H1 (cell line): ENCODE measurements at regions of chr12 and their contacts with region 1.

Region 1: DNA sequence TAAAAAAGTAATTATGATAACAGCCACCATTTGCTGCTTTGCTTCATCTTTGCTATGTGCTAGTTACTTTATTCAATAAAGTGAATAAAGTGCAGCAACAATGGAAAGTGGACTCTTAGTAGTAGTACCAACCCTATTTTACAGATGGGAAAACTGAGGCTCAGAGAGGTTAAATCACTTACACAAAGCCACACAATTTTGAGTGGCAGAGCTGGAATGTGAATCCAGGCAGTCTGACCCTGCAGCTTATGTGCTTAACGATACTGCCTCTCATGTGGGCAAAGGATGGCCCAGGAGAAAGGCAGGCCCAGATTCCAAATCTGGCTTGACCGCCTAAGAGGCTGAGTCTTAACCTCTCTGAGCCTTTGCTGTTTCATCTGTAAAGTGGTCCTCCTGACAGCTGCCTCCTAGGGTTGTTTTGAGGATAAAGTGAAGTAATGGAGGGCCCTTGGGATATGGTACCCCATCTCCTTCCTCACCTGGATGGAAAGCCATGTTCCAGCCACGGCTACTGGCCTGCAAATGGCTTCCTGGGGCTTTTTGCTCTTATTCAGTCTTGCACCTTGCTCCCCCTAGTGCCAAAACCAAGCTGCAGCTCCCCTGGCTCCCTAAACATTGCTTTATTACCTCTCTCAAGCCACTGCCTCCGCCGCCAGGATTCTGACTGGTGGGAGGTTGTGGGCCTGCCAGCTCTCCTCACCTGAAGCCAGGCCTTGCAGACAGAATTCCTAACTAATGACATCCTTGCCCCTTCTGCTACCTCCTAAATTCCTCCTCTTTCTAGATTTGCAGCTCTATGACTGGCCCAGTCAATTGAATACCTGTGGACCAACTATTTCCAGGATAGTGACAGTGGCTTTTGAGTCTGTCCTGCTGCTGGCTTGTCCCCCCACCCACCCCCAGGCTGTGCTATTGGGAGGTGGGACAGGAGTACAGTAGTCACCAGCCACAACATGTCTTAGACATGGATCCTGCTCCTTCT is 283.3 kb upstream of the PWP1 start:
- DNase-seq: peak; percentile 79 to 81
- H3K4me3 ChIP-seq: no peak overlapping the region; a peak in 1 of 8 replicates
- H3K27ac ChIP-seq: no peak overlapping the region
- H3K4me1 ChIP-seq: peaks cover 1 to 13% (median 8%) of the 10 kb centered on the region in 4 experiments; a peak in 4 of 7 replicates
- H3K27me3 ChIP-seq: no peaks in the 10 kb centered on the region; a peak in 1 of 7 replicates
- CTCF ChIP-seq: peak; percentile 73 to 89 (median 87)
- EP300 ChIP-seq: no peak
- POLR2A ChIP-seq: no peak
- RAD21 ChIP-seq: peak; percentile 80 to 89

Region 2: DNA sequence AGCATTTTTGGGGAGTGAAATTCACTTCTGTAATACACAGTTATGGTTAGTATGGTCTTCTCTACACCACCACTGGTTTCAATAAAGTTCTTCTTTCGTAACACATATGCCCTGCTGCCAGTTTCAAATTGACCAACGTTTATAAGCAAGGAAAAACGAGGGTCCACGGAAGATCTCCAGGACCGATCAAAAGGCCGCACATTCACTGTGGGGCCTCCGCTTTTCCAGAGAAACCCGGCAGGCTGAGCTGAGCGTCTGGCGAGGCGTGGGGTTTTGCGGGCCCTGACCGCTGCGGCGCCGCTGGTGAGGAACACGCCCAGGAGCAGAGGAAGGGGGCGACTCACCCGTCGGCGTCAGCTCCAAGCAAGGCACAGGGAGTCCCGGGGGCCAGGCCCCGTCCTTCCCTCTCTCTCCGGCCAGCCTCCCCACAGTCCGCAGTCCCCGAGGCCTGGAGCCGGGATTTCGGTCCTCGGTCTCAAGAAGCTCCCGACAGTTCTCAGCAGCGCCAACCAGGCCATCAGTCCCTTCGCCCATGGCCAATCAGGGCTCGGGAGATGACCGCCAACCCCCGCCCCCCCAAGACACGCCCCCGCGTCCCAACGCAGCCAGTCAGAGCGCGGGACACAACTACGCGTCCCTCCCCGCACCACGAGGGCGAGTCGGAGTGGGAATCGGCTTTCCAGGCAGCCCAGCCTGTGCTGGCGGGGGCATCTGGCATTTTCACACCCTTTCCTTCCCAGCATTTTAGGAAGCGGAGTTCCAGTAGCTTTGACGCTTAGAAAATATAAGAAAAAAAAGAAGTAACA is 415.5 kb before region 1 on chr12 and contains the start of gene MTERF2:
- CTCF ChIA-PET with region 1: no interaction called
- POLR2A ChIA-PET with region 1: no interaction called
- DNase-seq: peak; percentile 77 to 85
- H3K4me3 ChIP-seq: peak within 1 kb of the TSS; percentile 74 to 86 (median 86)
- H3K27ac ChIP-seq: peak within 1 kb of the TSS; percentile 33; the same call in 1 of the 2 replicates
- H3K4me1 ChIP-seq: peaks cover 2 to 10% (median 6%) of the 10 kb centered on the region in 4 experiments
- H3K27me3 ChIP-seq: no peaks in the 10 kb centered on the region; a peak in 1 of 7 replicates
- CTCF ChIP-seq: no peak
- EP300 ChIP-seq: no peak
- POLR2A ChIP-seq: peak in 1 of 2 experiments; percentile 73; a peak in 2 of 3 replicates
- RAD21 ChIP-seq: no peak
- total RNA-seq, gene MTERF2: 6.2 and 7.1 TPM in 2 replicates

Region 3: DNA sequence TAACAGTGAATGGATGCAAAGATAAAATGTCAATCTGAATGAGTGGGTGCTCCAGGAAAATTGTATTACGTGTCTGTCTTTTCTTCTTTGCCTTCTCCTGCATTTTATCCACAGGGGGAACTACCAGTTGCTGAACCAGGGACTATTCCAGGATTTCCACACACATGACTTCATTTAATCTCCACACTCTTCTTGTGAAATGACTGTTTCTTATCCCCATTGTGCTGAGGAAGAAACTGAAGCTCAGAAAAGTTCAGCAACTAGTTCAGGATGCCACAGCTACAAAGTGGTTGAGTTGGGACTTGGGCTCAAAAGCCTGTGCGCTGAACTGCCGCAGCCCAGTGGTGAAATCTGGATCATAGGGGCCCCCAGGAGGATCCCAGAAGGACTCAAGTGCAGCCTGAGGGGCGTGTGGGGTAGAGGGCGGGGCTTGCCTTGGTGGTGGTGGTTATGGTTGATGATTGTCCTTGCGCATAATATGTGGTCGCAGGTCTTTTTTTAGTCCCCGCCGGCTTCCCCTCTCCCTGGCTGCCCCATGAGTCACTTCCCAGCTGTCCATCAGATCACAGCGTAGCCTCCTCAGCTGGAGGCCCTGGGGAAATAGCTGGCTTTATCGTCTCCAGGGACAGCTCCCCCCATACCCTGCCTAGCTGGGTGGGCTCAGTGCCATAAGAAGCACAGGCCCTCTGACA is 73.7 kb before region 1 on chr12:
- CTCF ChIA-PET with region 1: interaction called, 18 read pairs
- POLR2A ChIA-PET with region 1: no interaction called
- DNase-seq: no peak
- H3K4me3 ChIP-seq: no peak overlapping the region
- H3K27ac ChIP-seq: no peak overlapping the region
- H3K4me1 ChIP-seq: peaks cover 0 to 8% (median 5%) of the 10 kb centered on the region in 4 experiments; a peak in 6 of 7 replicates
- H3K27me3 ChIP-seq: no peaks in the 10 kb centered on the region
- CTCF ChIP-seq: no peak
- EP300 ChIP-seq: no peak
- POLR2A ChIP-seq: no peak
- RAD21 ChIP-seq: no peak

Region 4: DNA sequence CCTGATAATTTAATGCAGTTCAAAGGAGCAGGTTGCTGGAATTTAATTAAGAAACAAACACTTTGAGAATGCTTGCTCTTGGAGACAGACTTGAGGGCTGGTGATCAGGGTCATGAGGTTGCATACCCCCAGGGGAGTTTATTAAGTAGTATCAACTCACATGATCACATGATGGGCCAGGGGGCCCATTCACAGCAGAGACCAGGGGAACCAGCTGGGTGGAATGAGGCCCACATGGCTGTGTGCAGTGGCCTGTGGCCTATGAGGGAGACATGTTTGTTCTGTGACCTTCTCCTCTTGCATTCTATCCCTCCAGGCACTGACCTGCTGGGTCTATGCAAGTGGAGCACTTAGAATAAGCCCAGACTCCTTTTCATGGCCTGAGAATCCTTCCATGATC is 16.6 kb after region 1 on chr12:
- CTCF ChIA-PET with region 1: interaction called, 41 read pairs
- POLR2A ChIA-PET with region 1: no interaction called
- DNase-seq: no peak
- H3K4me3 ChIP-seq: no peak overlapping the region
- H3K27ac ChIP-seq: no peak overlapping the region
- H3K4me1 ChIP-seq: no peaks in the 10 kb centered on the region
- H3K27me3 ChIP-seq: no peaks in the 10 kb centered on the region
- CTCF ChIP-seq: no peak
- EP300 ChIP-seq: no peak
- POLR2A ChIP-seq: no peak
- RAD21 ChIP-seq: no peak

Region 5: GRCh38 chr12:107448198-107448597 is 45.9 kb after region 1 on chr12:
- CTCF ChIA-PET with region 1: interaction called, 22 read pairs
- POLR2A ChIA-PET with region 1: no interaction called
- DNase-seq: peak in 1 of 2 experiments; percentile 76
- H3K4me3 ChIP-seq: no peak overlapping the region
- H3K27ac ChIP-seq: no peak overlapping the region
- H3K4me1 ChIP-seq: peaks cover 0 to 7% (median 2%) of the 10 kb centered on the region in 4 experiments; a peak in 1 of 7 replicates
- H3K27me3 ChIP-seq: no peaks in the 10 kb centered on the region
- CTCF ChIP-seq: peak; percentile 40 to 70 (median 70)
- EP300 ChIP-seq: no peak
- POLR2A ChIP-seq: no peak
- RAD21 ChIP-seq: peak; percentile 50 to 64

Region 6: DNA sequence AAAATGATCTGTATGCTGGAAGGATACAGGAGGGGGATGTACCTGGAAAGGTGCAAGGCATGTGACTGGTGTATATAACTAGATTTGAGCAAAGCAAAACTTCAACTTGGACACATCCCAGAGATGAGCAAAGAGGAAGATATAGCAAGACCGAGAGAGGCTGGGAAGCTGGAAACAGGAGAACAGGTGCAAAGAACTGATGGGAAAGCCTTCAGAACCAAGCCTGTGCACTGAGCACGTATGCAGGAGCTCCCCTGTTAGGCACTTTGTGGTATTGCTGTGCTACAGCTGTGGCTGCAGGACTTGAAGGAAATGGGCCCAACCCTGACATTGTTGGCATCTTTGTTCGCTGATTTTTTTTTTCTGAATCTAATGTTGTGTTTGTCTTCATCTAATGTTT is 162.6 kb after region 1 on chr12:
- CTCF ChIA-PET with region 1: interaction called, 21 read pairs
- POLR2A ChIA-PET with region 1: no interaction called
- DNase-seq: no peak
- H3K4me3 ChIP-seq: no peak overlapping the region
- H3K27ac ChIP-seq: no peak overlapping the region
- H3K4me1 ChIP-seq: peaks cover 0 to 6% (median 2%) of the 10 kb centered on the region in 4 experiments; a peak in 3 of 7 replicates
- H3K27me3 ChIP-seq: no peaks in the 10 kb centered on the region
- CTCF ChIP-seq: peak; percentile 67 to 89 (median 78)
- EP300 ChIP-seq: no peak
- POLR2A ChIP-seq: no peak
- RAD21 ChIP-seq: peak; percentile 78 to 81